ENCODE measurements at regions of chr15 and their contacts with region 1.

Region 1: GRCh38 chr15:32651229-32651837 is 9.8 kb downstream of the SCG5 start:
- DNase-seq: peak; percentile 42
- H3K4me3 ChIP-seq: no peak overlapping the region
- H3K27ac ChIP-seq: no peak overlapping the region
- H3K4me1 ChIP-seq: no peaks in the 10 kb centered on the region
- H3K27me3 ChIP-seq: no peaks in the 10 kb centered on the region
- CTCF ChIP-seq: peak; percentile 72 to 90 (median 81)
- EP300 ChIP-seq: no peak
- POLR2A ChIP-seq: no peak

Region 2: DNA sequence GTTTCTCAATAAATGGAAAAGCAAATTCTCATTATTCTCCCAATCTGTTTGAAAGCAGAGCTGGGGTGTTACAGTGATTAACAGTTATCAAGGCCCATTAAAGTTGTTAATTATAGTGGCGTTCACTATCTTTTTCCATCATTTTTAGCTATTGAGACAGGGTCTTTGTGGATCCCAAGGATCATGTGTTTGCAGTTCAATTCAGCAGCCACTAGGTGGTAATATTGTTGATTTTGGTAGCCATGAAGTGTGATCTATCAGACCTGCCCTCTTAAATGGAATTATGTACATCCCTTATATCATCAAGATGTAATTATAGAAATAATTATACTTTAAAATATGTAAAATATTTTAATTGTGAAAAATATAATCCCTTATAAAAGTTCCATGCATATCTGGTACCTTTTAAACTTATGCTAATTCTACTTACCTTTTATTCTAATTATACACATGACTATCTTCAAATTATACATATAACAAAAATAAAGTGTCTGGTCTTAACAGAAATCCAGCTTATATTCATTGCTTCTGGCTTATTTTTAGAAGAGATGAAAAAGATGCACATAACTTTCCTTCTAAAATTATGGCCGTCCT is 192.9 kb after region 1 on chr15:
- in situ Hi-C with region 1: loop called (anchors 25 kb)
- intact Hi-C with region 1: no loop called
- DNase-seq: no peak
- H3K4me3 ChIP-seq: no peak overlapping the region
- H3K27ac ChIP-seq: no peak overlapping the region
- H3K4me1 ChIP-seq: no peaks in the 10 kb centered on the region
- H3K27me3 ChIP-seq: no peaks in the 10 kb centered on the region
- CTCF ChIP-seq: peak; percentile 44 to 66 (median 54)
- EP300 ChIP-seq: no peak
- POLR2A ChIP-seq: no peak

Region 3: DNA sequence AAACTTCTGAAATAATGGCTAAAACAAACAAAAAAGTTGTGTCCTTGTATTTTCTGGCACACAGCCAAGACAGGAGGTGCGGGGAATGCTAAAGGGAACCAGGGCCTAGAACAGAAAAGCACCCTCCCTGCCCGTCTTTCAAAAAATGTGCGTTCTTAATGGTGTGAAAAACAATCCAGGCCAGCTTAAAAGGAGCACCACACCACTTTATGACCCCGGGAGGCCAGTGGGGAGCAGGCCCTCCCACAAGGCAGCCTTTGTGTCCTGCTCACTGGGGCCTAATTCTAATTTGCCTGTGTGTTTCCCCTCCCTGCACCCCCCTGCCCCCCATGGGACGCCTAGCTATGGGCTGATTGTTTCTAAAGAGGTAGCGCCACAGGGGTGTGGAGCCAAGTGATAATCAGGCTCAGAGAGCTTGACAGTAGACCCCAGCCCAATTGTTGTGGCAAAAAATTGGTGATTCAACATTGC is 247.8 kb after region 1 on chr15:
- in situ Hi-C with region 1: no loop called
- intact Hi-C with region 1: no loop called
- DNase-seq: peak; percentile 8
- H3K4me3 ChIP-seq: no peak overlapping the region
- H3K27ac ChIP-seq: no peak overlapping the region
- H3K4me1 ChIP-seq: peaks cover 0 to 6% (median 0%) of the 10 kb centered on the region in 4 donors
- H3K27me3 ChIP-seq: no peaks in the 10 kb centered on the region
- CTCF ChIP-seq: no peak
- EP300 ChIP-seq: no peak
- POLR2A ChIP-seq: no peak

Region 4: GRCh38 chr15:32994810-32995424 is 343.6 kb after region 1 on chr15:
- in situ Hi-C with region 1: loop called in 2 of 4 experiments (anchors 10 to 25 kb)
- intact Hi-C with region 1: no loop called
- DNase-seq: no peak
- H3K4me3 ChIP-seq: no peak overlapping the region
- H3K27ac ChIP-seq: no peak overlapping the region
- H3K4me1 ChIP-seq: no peaks in the 10 kb centered on the region
- H3K27me3 ChIP-seq: no peaks in the 10 kb centered on the region
- CTCF ChIP-seq: peak; percentile 47 to 60 (median 51)
- EP300 ChIP-seq: no peak
- POLR2A ChIP-seq: no peak

Region 5: DNA sequence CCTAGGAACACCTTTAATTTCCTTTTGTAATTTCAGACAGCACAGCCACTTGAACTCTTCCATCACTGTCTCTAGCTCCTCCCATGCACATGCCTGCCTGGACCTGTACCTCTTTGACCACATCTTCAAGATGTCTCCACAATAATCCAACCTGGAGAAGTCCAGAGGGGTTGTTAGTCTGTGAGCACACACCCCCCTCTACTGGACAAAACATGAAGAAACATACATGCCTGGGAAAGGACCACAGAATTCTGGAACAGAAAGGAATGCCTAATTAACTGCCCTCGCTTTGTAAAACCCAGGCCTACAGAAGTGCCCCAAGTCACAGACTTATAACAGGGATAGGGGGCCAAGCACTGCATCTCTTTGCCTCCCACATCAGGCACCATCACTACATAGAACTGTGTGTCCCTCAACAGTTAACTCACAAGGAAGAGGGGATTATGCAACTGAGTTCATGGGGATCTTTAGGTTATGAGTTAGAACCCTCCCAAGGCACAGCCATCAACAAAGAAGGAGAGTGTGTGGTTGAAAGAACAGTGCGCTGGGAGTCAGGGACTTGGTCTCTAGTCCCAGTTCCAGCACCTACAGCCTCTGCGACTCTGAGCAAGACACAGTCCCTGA is 481.5 kb after region 1 on chr15:
- in situ Hi-C with region 1: loop called in 1 of 4 experiments (anchors 25 kb)
- intact Hi-C with region 1: no loop called
- DNase-seq: peak; percentile 33
- H3K4me3 ChIP-seq: no peak overlapping the region
- H3K27ac ChIP-seq: no peak overlapping the region
- H3K4me1 ChIP-seq: peaks cover 0 to 12% (median 11%) of the 10 kb centered on the region in 4 donors
- H3K27me3 ChIP-seq: no peaks in the 10 kb centered on the region
- CTCF ChIP-seq: peak; percentile 51 to 77 (median 67)
- EP300 ChIP-seq: no peak
- POLR2A ChIP-seq: no peak

Region 6: DNA sequence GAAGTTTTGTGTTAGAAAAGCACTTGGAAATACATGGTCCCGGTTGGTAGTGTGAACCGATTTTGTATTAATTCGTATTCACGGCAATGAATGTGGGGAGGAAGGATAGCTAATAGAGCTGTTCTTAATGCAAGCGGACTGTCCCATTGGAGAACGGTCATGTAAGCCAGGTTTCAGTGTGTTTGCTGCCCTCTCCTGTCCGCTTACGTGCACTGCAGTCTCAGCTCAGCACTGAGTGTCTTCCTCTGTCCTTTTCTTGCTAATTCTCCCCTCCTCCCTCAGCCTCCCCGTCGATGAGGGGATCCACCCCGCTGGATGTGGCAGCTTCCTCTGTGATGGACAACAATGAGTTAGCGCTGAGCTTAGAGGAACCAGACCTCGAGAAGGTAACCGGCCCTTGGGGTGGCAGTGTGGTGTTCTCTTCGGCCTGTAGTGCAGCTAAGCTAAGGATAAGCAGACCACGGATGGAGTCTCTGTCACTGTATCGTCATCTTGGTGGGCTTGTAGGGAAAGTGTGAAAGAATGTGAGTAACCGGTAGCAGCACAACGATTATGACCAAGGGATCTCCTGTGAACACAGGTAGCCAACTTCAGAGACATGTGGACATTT is 1049.5 kb after region 1 on chr15:
- in situ Hi-C with region 1: loop called in 1 of 4 experiments (anchors 25 kb)
- intact Hi-C with region 1: no loop called
- DNase-seq: peak; percentile 53
- H3K4me3 ChIP-seq: no peak overlapping the region
- H3K27ac ChIP-seq: no peak overlapping the region
- H3K4me1 ChIP-seq: no peaks in the 10 kb centered on the region
- H3K27me3 ChIP-seq: no peaks in the 10 kb centered on the region
- CTCF ChIP-seq: peak; percentile 72 to 87 (median 83)
- EP300 ChIP-seq: no peak
- POLR2A ChIP-seq: no peak